A673 (cell line): ENCODE measurements at regions of chr17 and their contacts with region 1.

Region 1: DNA sequence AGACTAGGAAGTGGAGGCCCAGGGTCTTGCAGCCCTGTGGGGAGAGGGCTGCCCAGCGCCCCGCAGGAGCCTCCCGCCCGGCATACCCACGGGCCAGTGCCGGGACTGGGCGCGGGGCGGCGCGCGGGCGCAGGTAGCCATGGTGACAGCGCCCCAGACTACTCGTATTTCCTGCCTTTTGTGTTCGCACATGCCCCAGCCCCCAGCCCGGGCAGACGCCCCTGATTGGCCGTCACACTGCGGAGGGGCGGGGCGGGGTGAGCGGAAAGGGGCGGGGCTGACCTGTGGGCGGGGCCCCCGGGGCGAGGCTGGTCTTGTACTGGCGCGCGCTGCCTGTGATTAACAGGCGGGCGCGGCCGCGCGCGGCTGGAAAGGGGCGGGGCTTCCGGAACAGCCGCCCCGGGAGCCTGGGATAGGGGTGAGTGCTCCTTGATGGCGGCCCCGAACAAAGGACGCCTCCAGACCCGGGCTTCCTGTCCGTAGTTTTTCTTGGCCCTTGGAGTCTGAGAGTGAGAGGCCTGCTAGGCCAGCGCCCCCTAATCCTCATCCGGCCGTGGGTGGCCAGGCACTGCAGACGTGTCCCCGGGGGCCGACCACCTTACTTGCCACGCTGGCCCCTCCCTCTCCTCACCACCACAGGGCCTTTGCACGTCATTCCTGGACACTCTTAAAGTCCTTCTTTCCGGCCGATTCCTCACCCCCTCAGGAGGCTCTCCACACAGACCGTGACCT is 71.0 kb downstream of the RAI1 start:
- DNase-seq: peak; percentile 97
- H3K4me3 ChIP-seq: peak overlapping the region; percentile 45
- H3K27ac ChIP-seq: peak overlapping the region; percentile 89
- H3K4me1 ChIP-seq: peaks cover 49% of the 10 kb centered on the region
- H3K27me3 ChIP-seq: no peaks in the 10 kb centered on the region
- CTCF ChIP-seq: peak; percentile 56

Region 2: GRCh38 chr17:17663160-17664063 is 88.8 kb before region 1 on chr17:
- CTCF ChIA-PET with region 1: no interaction called
- POLR2A ChIA-PET with region 1: no interaction called
- intact Hi-C with region 1: no loop called
- DNase-seq: peak; percentile 92
- H3K4me3 ChIP-seq: no peak overlapping the region
- H3K27ac ChIP-seq: no peak overlapping the region
- H3K4me1 ChIP-seq: peaks cover 12% of the 10 kb centered on the region
- H3K27me3 ChIP-seq: no peaks in the 10 kb centered on the region
- CTCF ChIP-seq: no peak

Region 3: DNA sequence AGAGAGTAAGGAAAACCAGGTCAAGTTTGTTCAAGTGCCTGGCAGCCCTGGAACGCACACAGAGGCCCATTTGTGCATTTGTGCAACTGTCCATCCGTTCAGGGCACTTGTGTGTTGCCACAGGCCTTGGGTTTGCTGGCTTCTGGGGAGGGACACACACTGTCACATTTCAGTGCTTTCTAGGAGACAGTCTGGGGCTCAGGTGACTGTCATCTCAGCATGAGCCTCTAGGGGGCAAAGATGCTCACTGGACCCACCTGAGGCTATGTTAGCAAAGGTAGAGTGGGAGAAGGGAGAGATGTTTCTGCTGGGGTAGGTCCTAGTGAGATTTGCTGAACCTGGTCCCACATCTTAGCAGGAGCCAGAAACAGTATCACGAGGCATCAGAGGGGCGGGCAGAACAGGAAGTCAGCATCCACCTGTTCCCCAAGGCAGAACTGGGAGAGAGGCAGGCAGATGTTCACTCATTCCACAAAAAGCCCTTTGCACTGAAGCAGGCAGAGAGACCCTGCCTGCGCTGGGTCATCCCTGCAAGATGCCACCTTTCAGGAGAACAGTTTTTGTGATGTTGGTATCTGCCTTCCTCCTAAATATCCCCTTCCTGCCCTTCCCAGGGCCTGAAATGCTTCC is 22.5 kb before region 1 on chr17:
- CTCF ChIA-PET with region 1: no interaction called
- POLR2A ChIA-PET with region 1: no interaction called
- intact Hi-C with region 1: no loop called
- DNase-seq: no peak
- H3K4me3 ChIP-seq: no peak overlapping the region
- H3K27ac ChIP-seq: no peak overlapping the region
- H3K4me1 ChIP-seq: peaks cover 35% of the 10 kb centered on the region
- H3K27me3 ChIP-seq: no peaks in the 10 kb centered on the region
- CTCF ChIP-seq: peak; percentile 58

Region 4: DNA sequence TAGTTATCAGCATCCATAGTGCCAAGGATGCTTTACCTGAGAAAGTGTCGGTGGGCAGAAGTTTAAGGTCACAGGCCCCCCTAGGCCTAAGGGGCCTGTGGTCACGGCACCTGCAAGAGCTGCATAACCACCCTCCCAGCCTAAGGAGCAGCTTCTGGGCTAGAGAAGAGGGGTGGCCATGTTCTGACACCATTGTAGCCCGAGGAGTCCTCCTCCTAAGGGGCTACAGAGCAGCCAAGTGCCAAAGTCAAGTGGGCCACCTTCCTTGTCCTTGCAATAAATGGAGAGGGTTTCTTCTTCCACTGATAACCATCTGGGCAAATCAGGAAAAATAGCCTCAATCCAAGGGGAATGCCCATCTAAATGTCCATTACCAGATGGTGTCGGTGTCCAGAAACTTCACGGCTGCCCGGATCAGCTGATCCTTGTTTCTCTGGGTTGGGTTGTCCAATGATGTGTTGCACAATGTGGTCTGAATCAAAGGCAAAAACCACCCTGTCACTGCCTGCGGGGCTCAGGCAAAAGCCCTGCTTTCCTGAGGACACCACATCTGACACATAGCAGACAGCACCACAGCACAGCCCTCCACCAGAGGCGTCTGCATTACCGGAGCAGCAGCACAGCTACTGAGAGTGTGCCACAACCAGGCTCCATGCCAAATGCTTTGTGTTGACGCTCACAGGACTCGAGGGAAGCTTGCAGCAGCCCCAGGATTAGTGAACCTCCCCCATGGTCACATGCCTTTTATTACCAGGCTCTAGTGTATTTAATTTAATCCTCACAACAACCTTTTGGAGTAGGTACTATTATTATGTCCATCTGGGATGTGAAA is 273.9 kb after region 1 on chr17:
- CTCF ChIA-PET with region 1: interaction called, 11 read pairs
- POLR2A ChIA-PET with region 1: no interaction called
- intact Hi-C with region 1: no loop called
- DNase-seq: peak; percentile 91
- H3K4me3 ChIP-seq: no peak overlapping the region
- H3K27ac ChIP-seq: no peak overlapping the region
- H3K4me1 ChIP-seq: peaks cover 25% of the 10 kb centered on the region
- H3K27me3 ChIP-seq: no peaks in the 10 kb centered on the region
- CTCF ChIP-seq: no peak